ENCODE measurements at regions of chr3 and their contacts with region 1.

Region 1: GRCh38 chr3:194046995-194047645 is 88.8 kb upstream of the HES1 start:
- DNase-seq: peak; percentile 49 to 64 (median 63)
- H3K4me3 ChIP-seq: peak overlapping the region in 1 of 3 experiments; percentile 49
- H3K4me3 Mint-ChIP-seq: peak overlapping the region; percentile 4 to 67
- H3K27ac ChIP-seq: peak overlapping the region; percentile 78 to 86
- H3K27ac Mint-ChIP-seq: peak overlapping the region; percentile 86 to 94 (median 92)
- H3K4me1 ChIP-seq: peaks cover 37 to 38% of the 10 kb centered on the region in 2 donors
- H3K4me1 Mint-ChIP-seq: peaks cover 43% of the 10 kb centered on the region
- H3K27me3 ChIP-seq: no peaks in the 10 kb centered on the region
- H3K27me3 Mint-ChIP-seq: peaks cover 4 to 6% (median 6%) of the 10 kb centered on the region in 3 donors
- CTCF ChIP-seq: no peak

Region 2: DNA sequence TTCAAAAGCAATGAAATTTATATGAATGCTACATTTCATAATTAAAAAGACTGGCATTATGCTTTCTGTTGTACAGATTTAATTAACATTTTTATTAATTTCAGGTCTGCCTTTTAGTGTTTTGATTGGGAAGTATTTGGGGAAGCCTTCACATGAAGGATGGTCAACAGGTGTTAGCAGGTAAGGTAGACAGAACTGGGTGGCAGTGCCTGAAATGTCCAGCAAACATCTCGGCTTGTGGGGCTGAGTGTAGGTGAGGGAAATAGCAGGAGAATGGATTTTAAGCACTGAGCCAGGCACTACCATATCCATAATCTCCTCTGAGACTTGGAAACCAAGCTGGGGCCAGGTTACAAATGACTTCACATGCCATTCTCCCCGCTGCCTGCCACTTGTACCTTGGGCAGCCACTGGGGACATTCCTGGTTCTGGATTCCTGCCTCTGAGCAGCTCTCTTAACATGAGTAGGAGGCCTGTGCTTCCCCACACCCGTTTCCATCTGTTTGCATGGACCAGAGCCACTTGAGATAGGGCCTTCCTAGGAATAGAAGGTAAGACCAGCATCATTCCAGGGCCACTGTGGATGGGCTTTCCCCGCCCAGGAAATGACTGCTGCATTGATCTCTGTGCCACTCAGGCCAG is 37.1 kb before region 1 on chr3:
- intact Hi-C with region 1: loop called in 1 of 2 experiments (anchors 5 kb)
- DNase-seq: no peak
- H3K4me3 ChIP-seq: no peak overlapping the region
- H3K4me3 Mint-ChIP-seq: peak overlapping the region in 1 of 2 donors; percentile 15
- H3K27ac ChIP-seq: no peak overlapping the region
- H3K27ac Mint-ChIP-seq: no peak overlapping the region
- H3K4me1 ChIP-seq: peaks cover 10 to 12% of the 10 kb centered on the region in 2 donors
- H3K4me1 Mint-ChIP-seq: peaks cover 16% of the 10 kb centered on the region
- H3K27me3 ChIP-seq: peaks cover 0 to 6% of the 10 kb centered on the region in 2 donors
- H3K27me3 Mint-ChIP-seq: peaks cover 10 to 26% (median 23%) of the 10 kb centered on the region in 3 donors
- CTCF ChIP-seq: no peak

Region 3: DNA sequence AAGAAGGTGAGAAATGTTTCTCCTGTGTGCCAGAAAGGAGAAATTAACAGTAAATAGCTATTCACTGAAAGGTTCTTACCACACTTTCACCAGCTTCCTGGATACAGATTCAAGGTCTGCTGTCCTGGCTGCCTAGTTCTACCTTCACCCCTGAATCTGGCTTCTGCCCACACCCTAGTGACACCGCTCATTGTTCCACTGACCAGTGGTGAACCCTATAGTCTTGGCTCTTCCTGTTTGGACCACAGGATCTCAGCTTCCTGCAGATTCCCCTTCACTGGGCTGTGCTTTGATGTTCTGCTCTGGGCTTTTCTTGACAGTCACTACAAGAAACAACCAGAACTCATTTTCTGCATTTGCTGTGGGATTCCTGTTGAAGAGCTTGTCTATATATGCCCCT is 973.8 kb after region 1 on chr3:
- intact Hi-C with region 1: no loop called
- DNase-seq: no peak
- H3K4me3 ChIP-seq: no peak overlapping the region
- H3K4me3 Mint-ChIP-seq: no peak overlapping the region
- H3K27ac ChIP-seq: no peak overlapping the region
- H3K27ac Mint-ChIP-seq: peak overlapping the region in 2 of 7 donors; percentile 11 to 37
- H3K4me1 ChIP-seq: peaks cover 19 to 20% of the 10 kb centered on the region in 2 donors
- H3K4me1 Mint-ChIP-seq: peaks cover 29% of the 10 kb centered on the region
- H3K27me3 ChIP-seq: no peaks in the 10 kb centered on the region
- H3K27me3 Mint-ChIP-seq: peaks cover 0 to 6% (median 4%) of the 10 kb centered on the region in 3 donors
- CTCF ChIP-seq: no peak

Measured in CD14-positive monocyte (primary cell).